ENCODE measurements at regions of chr2 and their contacts with region 1.

Region 1: DNA sequence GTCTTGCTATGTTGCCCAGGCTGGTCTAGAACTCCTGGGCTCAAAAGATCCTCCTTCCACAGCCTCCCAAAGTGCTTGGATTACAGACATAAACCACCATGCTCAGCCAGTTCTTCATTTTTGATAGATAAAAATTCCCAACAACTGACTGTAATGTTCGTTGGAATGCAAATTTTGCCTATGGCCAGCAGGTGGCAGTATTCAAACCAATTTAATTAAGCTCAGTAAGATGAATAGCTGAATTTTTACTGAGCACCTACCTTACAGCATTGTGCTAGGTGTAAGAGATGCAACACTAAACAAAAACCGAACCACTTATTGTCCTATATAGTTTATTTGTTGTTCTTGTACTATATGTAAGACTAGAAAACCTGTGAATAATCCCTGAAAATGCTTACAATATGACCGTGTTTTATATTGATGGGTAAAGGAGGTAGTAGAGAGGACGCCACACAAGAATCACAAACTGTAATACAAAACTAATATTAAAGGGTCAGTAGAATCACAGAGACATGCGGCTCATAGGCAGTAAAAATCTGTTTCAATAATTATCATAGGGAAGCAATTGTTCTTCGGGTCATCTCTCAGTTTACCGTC is 8.2 kb upstream of the TMEM182 start:
- DNase-seq: peak; percentile 22
- CTCF ChIP-seq: peak; percentile 74

Region 2: GRCh38 chr2:102736410-102737409 is 17.0 kb before region 1 on chr2:
- CTCF ChIA-PET with region 1: interaction called, 122 read pairs
- POLR2A ChIA-PET with region 1: no interaction called
- DNase-seq: peak; percentile 94
- CTCF ChIP-seq: no peak

Region 3: GRCh38 chr2:102771114-102771513 is 17.5 kb after region 1 on chr2:
- CTCF ChIA-PET with region 1: interaction called, 93 read pairs
- POLR2A ChIA-PET with region 1: no interaction called
- DNase-seq: no peak
- CTCF ChIP-seq: no peak

Region 4: GRCh38 chr2:102792568-102793208 is 39.0 kb after region 1 on chr2:
- CTCF ChIA-PET with region 1: interaction called, 12 read pairs
- POLR2A ChIA-PET with region 1: no interaction called
- DNase-seq: no peak
- CTCF ChIP-seq: no peak

Region 5: DNA sequence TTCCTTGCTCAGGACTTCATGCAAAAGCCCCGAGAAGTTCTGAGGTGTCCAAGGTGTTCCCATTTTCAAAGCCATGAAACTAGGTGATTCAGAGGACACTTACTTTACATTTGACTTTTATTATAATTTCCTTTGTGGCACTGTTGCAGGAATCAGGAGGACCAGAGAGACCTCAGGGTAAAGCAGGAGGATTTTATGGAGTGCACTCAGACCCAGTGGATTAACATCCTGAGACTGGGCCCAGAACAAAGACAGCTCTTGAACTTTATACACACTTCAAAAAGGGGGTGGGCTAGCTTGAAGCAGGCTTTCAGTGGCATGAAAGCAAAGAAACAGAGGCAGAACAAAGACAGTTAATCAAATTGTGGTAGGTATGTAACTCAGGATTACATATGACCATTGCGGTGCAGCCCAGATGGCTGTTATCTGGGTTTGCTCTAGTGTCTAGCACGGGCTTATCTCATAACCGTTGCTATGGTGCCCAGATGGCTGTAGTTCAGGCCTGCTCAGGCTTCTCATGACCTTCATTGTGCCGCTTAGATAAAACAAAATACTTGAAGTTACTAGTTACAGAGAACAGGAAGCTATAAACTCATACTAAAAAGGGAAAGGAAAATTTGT is 47.5 kb after region 1 on chr2:
- CTCF ChIA-PET with region 1: interaction called, 88 read pairs
- POLR2A ChIA-PET with region 1: no interaction called
- DNase-seq: no peak
- CTCF ChIP-seq: no peak

Region 6: GRCh38 chr2:102806250-102806837 is 52.7 kb after region 1 on chr2:
- CTCF ChIA-PET with region 1: interaction called, 88 read pairs
- POLR2A ChIA-PET with region 1: no interaction called
- DNase-seq: peak; percentile 73
- CTCF ChIP-seq: peak; percentile 76

Measured in GM10248 (cell line).